CD14-positive monocyte (primary cell): ENCODE measurements at regions of chr16 and their contacts with region 1.

Region 1: DNA sequence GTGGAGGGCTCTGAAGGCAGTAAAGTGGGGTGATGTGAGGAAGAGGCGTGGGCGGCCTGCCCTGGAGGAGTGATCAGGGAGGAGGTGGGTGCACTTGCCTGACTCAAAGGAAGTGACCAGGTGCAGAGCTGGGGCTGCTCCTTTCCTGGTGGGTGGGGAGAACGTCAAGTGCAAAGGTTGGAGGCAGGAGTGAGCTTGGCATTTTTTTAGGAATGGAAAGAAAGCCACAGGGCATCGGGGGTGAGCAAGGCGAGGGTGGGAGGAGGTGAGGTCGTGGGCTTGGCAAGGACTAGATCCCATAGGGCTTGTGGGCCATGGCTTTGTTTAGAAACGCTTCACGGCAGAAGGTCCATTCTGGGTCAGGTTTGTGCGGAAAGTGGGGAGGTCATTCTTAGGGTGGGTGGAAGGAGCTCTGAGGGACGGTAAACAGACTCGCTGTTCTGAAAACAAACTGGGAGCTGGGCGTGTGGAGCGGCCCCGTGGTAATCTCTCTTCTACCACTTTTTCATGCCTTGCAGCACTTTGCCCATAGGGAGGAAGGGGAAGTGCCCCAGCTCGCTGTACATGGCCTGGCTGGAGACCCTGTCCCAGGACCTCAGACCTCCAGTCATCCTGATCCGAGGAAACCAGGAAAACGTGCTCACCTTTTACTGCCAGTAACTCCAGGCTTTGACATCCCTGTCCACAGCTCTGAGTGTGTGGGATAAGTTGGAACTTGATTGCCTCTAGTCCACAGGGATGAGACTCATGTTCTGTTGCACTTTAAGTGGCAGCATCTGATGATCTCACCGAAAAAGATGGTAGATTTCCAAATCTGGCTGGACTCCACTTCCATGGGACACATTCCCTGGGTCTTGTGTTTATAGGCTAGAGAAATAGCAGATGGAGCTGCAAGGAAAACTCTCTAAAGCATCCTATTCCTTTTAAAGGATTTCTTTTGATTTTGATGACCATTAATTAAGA is 18.9 kb upstream of the HERPUD1 start:
- DNase-seq: peak; percentile 25 to 48 (median 45)
- H3K4me3 ChIP-seq: peak overlapping the region in 1 of 3 experiments; percentile 60
- H3K4me3 Mint-ChIP-seq: peak overlapping the region in 1 of 2 donors; percentile 53
- H3K27ac ChIP-seq: peak overlapping the region in 1 of 2 donors; percentile 23
- H3K27ac Mint-ChIP-seq: peak overlapping the region in 6 of 7 donors; percentile 25 to 94 (median 78)
- H3K4me1 ChIP-seq: peaks cover 68 to 73% of the 10 kb centered on the region in 2 donors
- H3K4me1 Mint-ChIP-seq: peaks cover 75% of the 10 kb centered on the region
- H3K27me3 ChIP-seq: no peaks in the 10 kb centered on the region
- H3K27me3 Mint-ChIP-seq: peaks cover 4 to 9% (median 4%) of the 10 kb centered on the region in 3 donors
- CTCF ChIP-seq: no peak

Region 2: GRCh38 chr16:56923446-56924091 is 10.5 kb after region 1 on chr16:
- intact Hi-C with region 1: loop called in 1 of 2 experiments (anchors 1 kb)
- DNase-seq: no peak
- H3K4me3 ChIP-seq: no peak overlapping the region
- H3K4me3 Mint-ChIP-seq: peak overlapping the region in 1 of 2 donors; percentile 42
- H3K27ac ChIP-seq: no peak overlapping the region
- H3K27ac Mint-ChIP-seq: no peak overlapping the region
- H3K4me1 ChIP-seq: peaks cover 9 to 15% of the 10 kb centered on the region in 2 donors
- H3K4me1 Mint-ChIP-seq: peaks cover 21% of the 10 kb centered on the region
- H3K27me3 ChIP-seq: no peaks in the 10 kb centered on the region
- H3K27me3 Mint-ChIP-seq: peaks cover 15 to 32% (median 16%) of the 10 kb centered on the region in 3 donors
- CTCF ChIP-seq: no peak

Region 3: GRCh38 chr16:57045694-57046381 is 132.8 kb after region 1 on chr16:
- intact Hi-C with region 1: no loop called
- DNase-seq: peak in 2 of 3 donors; percentile 32 to 39
- H3K4me3 ChIP-seq: peak overlapping the region in 1 of 3 experiments; percentile 16
- H3K4me3 Mint-ChIP-seq: no peak overlapping the region
- H3K27ac ChIP-seq: peak overlapping the region; percentile 15 to 68
- H3K27ac Mint-ChIP-seq: peak overlapping the region; percentile 53 to 89 (median 81)
- H3K4me1 ChIP-seq: peaks cover 48 to 50% of the 10 kb centered on the region in 2 donors
- H3K4me1 Mint-ChIP-seq: peaks cover 50% of the 10 kb centered on the region
- H3K27me3 ChIP-seq: no peaks in the 10 kb centered on the region
- H3K27me3 Mint-ChIP-seq: peaks cover 0 to 6% (median 2%) of the 10 kb centered on the region in 3 donors
- CTCF ChIP-seq: peak; percentile 38